Heart left ventricle (tissue), 16 donors: ENCODE measurements at regions of chr11 and their contacts with region 1.

Region 1: GRCh38 chr11:6377902-6378639 is 12.2 kb upstream of the SMPD1 start:
- DNase-seq: no peak
- ATAC-seq: peak; percentile 41 to 90 (median 71)
- H3K4me3 ChIP-seq: peak overlapping the region in 1 of 12 donors; percentile 19
- H3K27ac ChIP-seq: peak overlapping the region in 11 of 12 donors; percentile 11 to 76 (median 46)
- H3K4me1 ChIP-seq: peaks cover 0 to 11% (median 4%) of the 10 kb centered on the region in 12 donors
- H3K27me3 ChIP-seq: no peaks in the 10 kb centered on the region
- CTCF ChIP-seq: no peak
- POLR2A ChIP-seq: no peak

Region 2: DNA sequence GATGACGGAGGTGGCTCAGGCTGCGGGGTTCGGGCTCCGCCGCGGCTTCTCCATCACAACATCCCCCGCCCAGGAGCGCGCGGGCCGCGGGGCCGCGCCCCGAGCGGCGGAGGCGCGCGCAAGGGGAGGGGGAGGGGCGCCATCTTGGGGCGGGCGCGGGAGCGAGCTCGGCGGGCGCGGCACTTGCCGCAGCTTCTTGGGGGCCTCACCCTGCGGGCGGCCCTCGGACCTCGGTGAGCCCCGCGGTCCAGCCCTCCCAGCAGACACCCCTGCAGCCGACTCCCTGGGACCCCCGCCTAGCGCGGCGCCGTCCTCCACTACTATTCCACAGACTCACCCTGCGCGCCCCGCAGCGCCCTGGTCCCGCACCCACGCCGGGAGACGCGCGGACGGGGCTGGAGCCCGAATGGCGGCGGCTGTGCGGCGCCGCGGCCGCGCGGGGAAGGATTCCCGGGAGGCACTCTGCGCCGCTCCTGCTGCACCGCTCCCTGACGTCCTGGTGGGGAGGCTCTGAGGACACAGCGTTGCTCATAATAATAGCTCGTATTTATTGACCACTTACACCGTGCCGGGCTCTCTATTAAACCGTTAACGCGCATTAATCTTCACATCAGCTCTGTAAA is 41.0 kb after region 1 on chr11 and contains the start of gene APBB1:
- intact Hi-C with region 1: loop called in 1 of 10 experiments (anchors 5 kb)
- DNase-seq: peak; percentile 65 to 85 (median 78)
- ATAC-seq: peak; percentile 68 to 97 (median 90)
- H3K4me3 ChIP-seq: peak within 1 kb of the TSS; percentile 74 to 100 (median 94)
- H3K27ac ChIP-seq: peak within 1 kb of the TSS; percentile 89 to 99 (median 94)
- H3K4me1 ChIP-seq: peaks cover 0 to 40% (median 14%) of the 10 kb centered on the region in 12 donors
- H3K27me3 ChIP-seq: peaks cover 0 to 9% (median 0%) of the 10 kb centered on the region in 9 donors
- CTCF ChIP-seq: peak in 5 of 12 donors; percentile 8 to 20 (median 16)
- POLR2A ChIP-seq: peak; percentile 1 to 75
- total RNA-seq, gene APBB1: 50.3 to 101 (median 83.5) TPM

Region 3: GRCh38 chr11:6443269-6444003 is 65.4 kb after region 1 on chr11:
- intact Hi-C with region 1: loop called (anchors 1 to 5 kb)
- DNase-seq: peak; percentile 40 to 70 (median 44)
- ATAC-seq: peak in 3 of 4 donors; percentile 81 to 87 (median 83)
- H3K4me3 ChIP-seq: no peak overlapping the region
- H3K27ac ChIP-seq: no peak overlapping the region
- H3K4me1 ChIP-seq: peaks cover 0 to 5% (median 0%) of the 10 kb centered on the region in 12 donors
- H3K27me3 ChIP-seq: no peaks in the 10 kb centered on the region
- CTCF ChIP-seq: peak; percentile 66 to 90 (median 80)
- POLR2A ChIP-seq: no peak

Region 4: DNA sequence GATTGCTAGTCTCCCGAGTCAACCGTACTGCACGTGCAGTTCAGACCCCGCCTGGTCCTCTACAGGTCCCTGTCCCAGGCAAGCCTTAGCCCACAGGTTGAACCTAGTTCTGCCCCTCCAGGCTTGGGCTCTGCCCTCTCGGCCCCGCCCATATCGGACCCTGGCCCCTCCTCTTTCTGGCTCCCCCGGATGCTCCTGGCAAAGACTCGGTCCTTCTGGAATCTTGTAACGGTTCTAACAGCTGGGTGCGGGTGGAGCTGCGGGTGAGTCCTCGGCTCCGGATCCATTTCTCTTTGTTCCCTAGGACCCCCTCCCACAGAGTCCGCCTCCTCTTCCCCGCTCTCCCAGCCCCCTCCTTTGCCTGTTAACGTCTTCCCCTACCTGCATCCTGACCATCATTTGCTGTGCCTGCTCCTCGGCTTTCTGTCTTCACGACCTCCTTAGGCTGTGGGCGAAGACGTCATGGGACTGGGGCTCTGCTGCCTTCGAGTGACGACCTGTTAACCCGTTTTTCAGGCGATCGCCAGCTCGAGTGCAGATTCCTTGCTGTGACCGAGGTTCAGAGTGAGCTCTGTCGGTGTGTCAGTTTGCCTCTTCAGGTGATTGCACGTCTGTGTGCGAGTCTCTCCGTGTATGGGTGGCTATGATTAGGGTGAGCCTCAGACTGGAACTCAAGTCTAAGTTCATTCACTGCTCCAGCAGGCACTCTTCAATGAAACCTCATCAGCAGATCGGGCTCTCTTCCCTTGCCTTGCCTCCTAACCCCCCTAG is 119.2 kb after region 1 on chr11 and contains the start of gene DNHD1:
- intact Hi-C with region 1: loop called in 3 of 10 experiments (anchors 5 kb)
- DNase-seq: peak in 2 of 5 donors; percentile 48 to 57
- ATAC-seq: peak; percentile 35 to 70 (median 56)
- H3K4me3 ChIP-seq: peak within 1 kb of the TSS in 8 of 12 donors; percentile 4 to 43 (median 25)
- H3K27ac ChIP-seq: peak within 1 kb of the TSS in 4 of 12 donors; percentile 22 to 41 (median 32)
- H3K4me1 ChIP-seq: peaks cover 0 to 19% (median 0%) of the 10 kb centered on the region in 12 donors
- H3K27me3 ChIP-seq: no peaks in the 10 kb centered on the region
- CTCF ChIP-seq: no peak
- POLR2A ChIP-seq: no peak
- total RNA-seq, gene DNHD1: 3.9 to 9.4 (median 5.4) TPM

Region 5: GRCh38 chr11:6505577-6506240 is 127.6 kb after region 1 on chr11:
- intact Hi-C with region 1: loop called (anchors 1 to 5 kb)
- DNase-seq: no peak
- ATAC-seq: peak in 3 of 4 donors; percentile 64 to 72 (median 66)
- H3K4me3 ChIP-seq: no peak overlapping the region
- H3K27ac ChIP-seq: no peak overlapping the region
- H3K4me1 ChIP-seq: no peaks in the 10 kb centered on the region
- H3K27me3 ChIP-seq: no peaks in the 10 kb centered on the region
- CTCF ChIP-seq: peak; percentile 60 to 83 (median 75)
- POLR2A ChIP-seq: no peak

Region 6: GRCh38 chr11:6705905-6706535 is 327.9 kb after region 1 on chr11:
- intact Hi-C with region 1: loop called in 3 of 10 experiments (anchors 5 to 10 kb)
- DNase-seq: peak in 1 of 5 donors; percentile 46
- ATAC-seq: peak in 3 of 4 donors; percentile 49 to 61 (median 59)
- H3K4me3 ChIP-seq: no peak overlapping the region
- H3K27ac ChIP-seq: peak overlapping the region in 8 of 12 donors; percentile 7 to 53 (median 30)
- H3K4me1 ChIP-seq: peaks cover 0 to 25% (median 16%) of the 10 kb centered on the region in 12 donors
- H3K27me3 ChIP-seq: no peaks in the 10 kb centered on the region
- CTCF ChIP-seq: peak; percentile 82 to 97 (median 93)
- POLR2A ChIP-seq: no peak

Region 7: GRCh38 chr11:6757373-6757967 is 379.4 kb after region 1 on chr11:
- intact Hi-C with region 1: loop called in 1 of 10 experiments (anchors 5 kb)
- DNase-seq: peak in 4 of 5 donors; percentile 36 to 62 (median 49)
- ATAC-seq: peak in 3 of 4 donors; percentile 63 to 75 (median 74)
- H3K4me3 ChIP-seq: no peak overlapping the region
- H3K27ac ChIP-seq: no peak overlapping the region
- H3K4me1 ChIP-seq: no peaks in the 10 kb centered on the region
- H3K27me3 ChIP-seq: no peaks in the 10 kb centered on the region
- CTCF ChIP-seq: peak; percentile 41 to 77 (median 64)
- POLR2A ChIP-seq: no peak